ENCODE measurements at regions of chr14 and their contacts with region 1.

Region 1: GRCh38 chr14:25406818-25407217 is 356.9 kb upstream of the STXBP6 start:
- DNase-seq: no peak
- H3K4me3 Mint-ChIP-seq: no peak overlapping the region
- H3K27ac Mint-ChIP-seq: no peak overlapping the region
- H3K4me1 Mint-ChIP-seq: no peaks in the 10 kb centered on the region
- H3K27me3 Mint-ChIP-seq: no peaks in the 10 kb centered on the region

Region 2: GRCh38 chr14:24806061-24806678 is 600.6 kb before region 1 on chr14:
- intact Hi-C with region 1: loop called (anchors 2 kb)
- DNase-seq: peak; percentile 5
- H3K4me3 Mint-ChIP-seq: no peak overlapping the region
- H3K27ac Mint-ChIP-seq: no peak overlapping the region
- H3K4me1 Mint-ChIP-seq: no peaks in the 10 kb centered on the region
- H3K27me3 Mint-ChIP-seq: peaks cover 5% of the 10 kb centered on the region

Measured in activated T-helper 1 cell treated with anti-CD3 and anti-CD28 coated beads, Interleukin-12 subunit alpha, Interleukin-12 subunit beta, Interleukin-2, Interleukin-4 antibody, amounts not matched to agents 30 ng/mL and 10 ng/mL and 1 ng/mL, durations not matched to agents 14 hours and 24 hours and 36 hours (primary cell).